HepG2 (cell line): ENCODE measurements at regions of chr14 and their contacts with region 1.

Region 1: GRCh38 chr14:52650774-52651173 is 44.6 kb downstream of the ERO1A start:
- DNase-seq: peak; percentile 26
- ATAC-seq: peak; percentile 85
- H3K4me3 ChIP-seq: no peak overlapping the region
- H3K27ac ChIP-seq: no peak overlapping the region
- H3K4me1 ChIP-seq: no peaks in the 10 kb centered on the region
- H3K27me3 ChIP-seq: no peaks in the 10 kb centered on the region
- CTCF ChIP-seq: peak; percentile 72
- EP300 ChIP-seq: no peak
- POLR2A ChIP-seq: no peak
- RAD21 ChIP-seq: no peak

Region 2: GRCh38 chr14:52589646-52590045 is 61.1 kb before region 1 on chr14:
- CTCF ChIA-PET with region 1: no interaction called
- POLR2A ChIA-PET with region 1: no interaction called
- in situ Hi-C with region 1: no loop called
- intact Hi-C with region 1: no loop called
- DNase-seq: no peak
- ATAC-seq: no peak
- H3K4me3 ChIP-seq: no peak overlapping the region
- H3K27ac ChIP-seq: no peak overlapping the region
- H3K4me1 ChIP-seq: no peaks in the 10 kb centered on the region
- H3K27me3 ChIP-seq: no peaks in the 10 kb centered on the region
- CTCF ChIP-seq: no peak
- EP300 ChIP-seq: no peak
- POLR2A ChIP-seq: no peak
- RAD21 ChIP-seq: no peak

Region 3: GRCh38 chr14:52640137-52640536 is 10.6 kb before region 1 on chr14:
- CTCF ChIA-PET with region 1: no interaction called
- POLR2A ChIA-PET with region 1: no interaction called
- in situ Hi-C with region 1: no loop called
- intact Hi-C with region 1: no loop called
- DNase-seq: no peak
- ATAC-seq: no peak; the same call in 2 of the 3 replicates
- H3K4me3 ChIP-seq: no peak overlapping the region
- H3K27ac ChIP-seq: no peak overlapping the region
- H3K4me1 ChIP-seq: no peaks in the 10 kb centered on the region
- H3K27me3 ChIP-seq: no peaks in the 10 kb centered on the region
- CTCF ChIP-seq: no peak
- EP300 ChIP-seq: no peak
- POLR2A ChIP-seq: no peak
- RAD21 ChIP-seq: no peak

Region 4: GRCh38 chr14:52716155-52716554 is 65.4 kb after region 1 on chr14:
- CTCF ChIA-PET with region 1: no interaction called
- POLR2A ChIA-PET with region 1: no interaction called
- in situ Hi-C with region 1: no loop called
- intact Hi-C with region 1: no loop called
- DNase-seq: no peak
- ATAC-seq: no peak
- H3K4me3 ChIP-seq: no peak overlapping the region
- H3K27ac ChIP-seq: no peak overlapping the region
- H3K4me1 ChIP-seq: peaks cover 4% of the 10 kb centered on the region
- H3K27me3 ChIP-seq: no peaks in the 10 kb centered on the region
- CTCF ChIP-seq: no peak
- EP300 ChIP-seq: no peak
- POLR2A ChIP-seq: no peak
- RAD21 ChIP-seq: no peak

Region 5: DNA sequence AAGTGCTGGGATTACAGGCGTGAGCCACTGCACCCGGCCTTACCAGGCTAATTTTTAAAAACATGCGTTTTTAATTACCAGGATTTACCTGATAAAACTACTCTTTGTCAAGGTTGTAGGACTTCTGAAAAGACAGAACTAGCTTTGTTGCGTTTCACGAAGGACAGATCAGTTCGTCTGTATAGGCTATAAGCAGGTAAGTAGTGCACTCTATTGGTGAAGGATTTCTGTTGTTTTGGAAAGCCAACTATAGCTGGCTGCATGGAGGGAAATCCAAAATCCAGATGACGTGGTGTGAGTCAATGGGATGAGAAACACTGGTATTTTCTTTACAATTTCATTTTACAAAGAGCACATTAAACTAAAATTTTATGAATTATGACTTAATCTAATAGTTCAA is 126.0 kb after region 1 on chr14:
- CTCF ChIA-PET with region 1: no interaction called
- POLR2A ChIA-PET with region 1: no interaction called
- in situ Hi-C with region 1: no loop called
- intact Hi-C with region 1: loop called (anchors 1 kb)
- DNase-seq: peak; percentile 17
- ATAC-seq: peak; percentile 38
- H3K4me3 ChIP-seq: no peak overlapping the region
- H3K27ac ChIP-seq: peak overlapping the region; percentile 33
- H3K4me1 ChIP-seq: 0 out of 2 replicates have a peak, but pooled peaks cover 9% of the 10 kb centered on the region
- H3K27me3 ChIP-seq: no peaks in the 10 kb centered on the region
- CTCF ChIP-seq: peak; percentile 55
- EP300 ChIP-seq: no peak
- POLR2A ChIP-seq: no peak
- RAD21 ChIP-seq: no peak

Region 6: GRCh38 chr14:53226553-53226952 is 575.8 kb after region 1 on chr14:
- CTCF ChIA-PET with region 1: no interaction called
- POLR2A ChIA-PET with region 1: no interaction called
- in situ Hi-C with region 1: no loop called
- intact Hi-C with region 1: loop called (anchors 5 kb)
- DNase-seq: no peak
- ATAC-seq: no peak
- H3K4me3 ChIP-seq: no peak overlapping the region
- H3K27ac ChIP-seq: no peak overlapping the region
- H3K4me1 ChIP-seq: no peaks in the 10 kb centered on the region
- H3K27me3 ChIP-seq: no peaks in the 10 kb centered on the region
- CTCF ChIP-seq: no peak
- EP300 ChIP-seq: no peak
- POLR2A ChIP-seq: no peak
- RAD21 ChIP-seq: no peak